ENCODE measurements at regions of chr4 and their contacts with region 1.

Region 1: GRCh38 chr4:84529169-84529751 is 30.2 kb upstream of the NKX6-1 start:
- DNase-seq: peak; percentile 29
- H3K4me3 ChIP-seq: no peak overlapping the region
- H3K27ac ChIP-seq: no peak overlapping the region
- H3K4me1 ChIP-seq: no peaks in the 10 kb centered on the region
- H3K27me3 ChIP-seq: peaks cover 0 to 9% of the 10 kb centered on the region in 2 experiments
- CTCF ChIP-seq: peak; percentile 36 to 48
- POLR2A ChIP-seq: no peak

Region 2: GRCh38 chr4:84511703-84512102 is 17.6 kb before region 1 on chr4:
- CTCF ChIA-PET with region 1: interaction called, 32 read pairs
- POLR2A ChIA-PET with region 1: no interaction called
- dilution Hi-C with region 1: no loop called
- intact Hi-C with region 1: no loop called
- DNase-seq: no peak
- H3K4me3 ChIP-seq: no peak overlapping the region
- H3K27ac ChIP-seq: no peak overlapping the region
- H3K4me1 ChIP-seq: no peaks in the 10 kb centered on the region
- H3K27me3 ChIP-seq: peaks cover 6 to 35% of the 10 kb centered on the region in 2 experiments
- CTCF ChIP-seq: no peak
- POLR2A ChIP-seq: no peak

Region 3: GRCh38 chr4:84547211-84547610 is 18.0 kb after region 1 on chr4:
- CTCF ChIA-PET with region 1: interaction called, 11 read pairs
- POLR2A ChIA-PET with region 1: no interaction called
- dilution Hi-C with region 1: no loop called
- intact Hi-C with region 1: no loop called
- DNase-seq: no peak
- H3K4me3 ChIP-seq: no peak overlapping the region
- H3K27ac ChIP-seq: no peak overlapping the region
- H3K4me1 ChIP-seq: no peaks in the 10 kb centered on the region
- H3K27me3 ChIP-seq: no peaks in the 10 kb centered on the region
- CTCF ChIP-seq: no peak
- POLR2A ChIP-seq: no peak

Region 4: GRCh38 chr4:84632092-84632491 is 102.8 kb after region 1 on chr4:
- CTCF ChIA-PET with region 1: no interaction called
- POLR2A ChIA-PET with region 1: no interaction called
- dilution Hi-C with region 1: no loop called
- intact Hi-C with region 1: no loop called
- DNase-seq: no peak
- H3K4me3 ChIP-seq: no peak overlapping the region
- H3K27ac ChIP-seq: no peak overlapping the region
- H3K4me1 ChIP-seq: no peaks in the 10 kb centered on the region
- H3K27me3 ChIP-seq: no peaks in the 10 kb centered on the region
- CTCF ChIP-seq: no peak
- POLR2A ChIP-seq: no peak

Region 5: DNA sequence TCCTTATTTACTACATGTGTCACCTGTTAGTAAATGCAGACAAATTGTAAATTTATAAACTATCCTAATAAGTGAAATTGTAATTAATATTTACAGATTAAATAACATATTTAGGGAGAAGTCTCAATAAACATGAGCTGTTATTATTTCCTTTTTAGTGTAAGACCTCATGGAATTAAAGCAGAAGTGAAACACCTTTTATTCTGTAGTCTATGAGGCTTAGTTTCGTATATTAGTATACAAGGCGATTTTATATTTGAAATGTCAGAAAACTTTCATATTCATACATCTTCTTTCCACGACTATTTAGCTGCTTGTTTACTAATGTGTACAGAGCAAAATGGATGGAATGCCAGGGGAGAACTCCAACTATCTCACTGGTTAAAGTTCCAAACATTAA is 1360.1 kb after region 1 on chr4:
- CTCF ChIA-PET with region 1: no interaction called
- POLR2A ChIA-PET with region 1: no interaction called
- dilution Hi-C with region 1: no loop called
- intact Hi-C with region 1: no loop called
- DNase-seq: no peak
- H3K4me3 ChIP-seq: no peak overlapping the region
- H3K27ac ChIP-seq: no peak overlapping the region
- H3K4me1 ChIP-seq: peaks cover 12% of the 10 kb centered on the region
- H3K27me3 ChIP-seq: no peaks in the 10 kb centered on the region
- CTCF ChIP-seq: no peak
- POLR2A ChIP-seq: no peak

Measured in endothelial cell of umbilical vein (primary cell).